Activated naive CD4-positive, alpha-beta T cell treated with anti-CD3 and anti-CD28 coated beads for 36 hours (primary cell): ENCODE measurements at regions of chr5 and their contacts with region 1.

Region 1: GRCh38 chr5:172999372-172999973 is 15.9 kb downstream of the ATP6V0E1 start:
- DNase-seq: peak; percentile 12
- H3K4me3 Mint-ChIP-seq: no peak overlapping the region
- H3K27ac Mint-ChIP-seq: peak overlapping the region; percentile 57
- H3K4me1 Mint-ChIP-seq: peaks cover 74% of the 10 kb centered on the region
- H3K27me3 Mint-ChIP-seq: no peaks in the 10 kb centered on the region

Region 2: DNA sequence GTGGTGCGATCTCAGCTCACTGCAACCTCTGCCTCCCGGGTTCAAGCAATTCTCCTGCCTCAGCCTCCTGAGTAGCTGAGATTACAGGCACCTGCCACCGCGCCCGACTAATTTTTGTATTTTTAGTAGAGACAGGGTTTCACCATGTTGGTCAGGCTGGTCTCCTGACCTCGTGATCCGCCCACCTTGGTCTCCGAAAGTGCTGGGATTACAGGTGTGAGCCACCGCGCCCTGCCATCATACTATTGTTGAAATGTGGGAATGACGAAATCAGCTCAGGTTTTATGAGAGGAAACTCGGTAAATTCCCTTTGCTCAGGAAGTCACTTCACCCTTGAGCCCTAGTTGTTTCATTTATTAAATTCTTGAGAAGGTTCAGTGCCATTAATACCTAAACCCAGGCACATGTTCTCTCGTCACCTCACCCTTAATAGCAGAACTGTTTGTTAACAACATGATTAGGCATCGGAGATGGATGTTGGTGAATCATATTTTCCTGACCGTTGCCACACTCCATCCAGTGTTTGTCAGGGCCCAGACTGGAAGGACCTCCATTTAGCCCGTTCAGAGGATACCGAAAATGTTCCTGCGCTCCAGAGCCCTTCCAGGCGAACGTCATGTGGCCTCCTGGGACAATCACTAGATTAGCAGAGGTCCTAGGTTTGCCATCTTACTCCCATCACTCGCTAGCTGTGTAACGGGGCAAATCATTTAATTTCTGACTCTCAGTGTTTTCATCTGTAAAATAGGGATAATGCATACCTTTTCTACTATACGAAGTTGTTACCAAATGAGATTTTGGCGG is 36.6 kb after region 1 on chr5:
- CTCF ChIA-PET with region 1: interaction called, 4 read pairs
- intact Hi-C with region 1: loop called (anchors 5 kb)
- DNase-seq: peak; percentile 72
- H3K4me3 Mint-ChIP-seq: peak overlapping the region; percentile 74
- H3K27ac Mint-ChIP-seq: peak overlapping the region; percentile 97
- H3K4me1 Mint-ChIP-seq: peaks cover 63% of the 10 kb centered on the region
- H3K27me3 Mint-ChIP-seq: no peaks in the 10 kb centered on the region

Region 3: GRCh38 chr5:173099461-173099860 is 100.0 kb after region 1 on chr5:
- CTCF ChIA-PET with region 1: no interaction called
- intact Hi-C with region 1: no loop called
- DNase-seq: no peak
- H3K4me3 Mint-ChIP-seq: no peak overlapping the region
- H3K27ac Mint-ChIP-seq: peak overlapping the region; percentile 74
- H3K4me1 Mint-ChIP-seq: peaks cover 61% of the 10 kb centered on the region
- H3K27me3 Mint-ChIP-seq: no peaks in the 10 kb centered on the region

Region 4: DNA sequence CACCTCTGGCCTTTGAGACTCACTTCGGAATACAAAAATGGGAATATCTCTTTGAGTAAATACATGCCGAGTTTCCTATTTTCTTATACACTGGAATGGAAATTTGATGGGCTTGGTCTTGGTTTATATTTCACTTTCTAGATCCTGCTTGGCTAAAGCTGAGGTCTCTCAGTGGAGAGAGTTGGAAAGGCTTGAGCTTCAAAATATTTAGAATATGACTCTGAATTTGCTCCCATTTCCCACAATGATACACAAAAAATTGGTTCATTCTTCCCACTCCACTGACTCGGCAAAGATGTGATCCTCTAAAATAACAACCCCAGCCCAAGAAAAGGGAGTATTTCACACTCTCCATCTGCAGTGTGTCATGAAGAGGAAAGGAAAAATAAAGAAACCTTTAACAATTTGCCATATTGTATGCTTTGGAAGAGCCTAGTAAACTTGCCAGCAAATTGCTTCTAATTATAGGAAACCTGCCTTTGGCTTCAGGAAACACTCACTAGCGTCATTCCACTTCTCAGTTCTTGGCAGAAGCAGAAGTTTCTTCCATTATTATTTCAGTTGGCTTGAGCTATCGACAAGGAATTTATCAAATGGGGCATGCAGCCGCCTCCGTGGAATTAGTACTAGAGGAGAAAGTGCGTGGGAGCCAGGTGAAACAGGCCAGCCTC is 1349.0 kb after region 1 on chr5:
- CTCF ChIA-PET with region 1: no interaction called
- intact Hi-C with region 1: no loop called
- DNase-seq: no peak
- H3K4me3 Mint-ChIP-seq: no peak overlapping the region
- H3K27ac Mint-ChIP-seq: no peak overlapping the region
- H3K4me1 Mint-ChIP-seq: no peaks in the 10 kb centered on the region
- H3K27me3 Mint-ChIP-seq: peaks cover 13% of the 10 kb centered on the region